ENCODE measurements at regions of chr1 and their contacts with region 1.

Region 1: DNA sequence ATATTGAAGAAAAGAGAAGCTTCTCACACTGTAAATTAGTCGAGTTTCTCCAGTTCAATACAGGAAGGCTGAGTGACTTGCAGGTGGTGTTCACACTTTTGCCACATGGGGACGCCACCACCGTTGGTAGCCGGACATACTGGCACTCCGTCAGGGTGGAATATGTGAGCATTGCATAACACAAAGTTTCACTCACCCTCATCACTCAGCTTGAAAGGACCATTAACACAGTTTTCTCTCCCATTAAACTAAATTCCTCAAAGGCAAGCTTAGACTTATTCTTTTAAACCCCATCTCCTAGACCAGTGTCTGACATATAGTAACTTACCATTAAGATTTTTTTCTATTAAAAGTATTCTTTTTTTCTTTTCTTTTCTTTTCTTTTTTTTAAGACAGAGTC is 105.3 kb upstream of the SERBP1 start:
- DNase-seq: peak; percentile 9
- ATAC-seq: peak; percentile 90
- H3K4me3 ChIP-seq: no peak overlapping the region
- H3K27ac ChIP-seq: no peak overlapping the region
- H3K4me1 ChIP-seq: no peaks in the 10 kb centered on the region
- H3K27me3 ChIP-seq: no peaks in the 10 kb centered on the region
- CTCF ChIP-seq: peak; percentile 66 to 77 (median 75)
- EP300 ChIP-seq: no peak
- POLR2A ChIP-seq: no peak
- RAD21 ChIP-seq: peak; percentile 65

Region 2: GRCh38 chr1:67552336-67552759 is 16.9 kb after region 1 on chr1:
- CTCF ChIA-PET with region 1: interaction called, 24 read pairs
- POLR2A ChIA-PET with region 1: interaction called, 3 read pairs
- RAD21 ChIA-PET with region 1: interaction called, 10 read pairs
- SMC1A ChIA-PET with region 1: interaction called, 14 read pairs
- in situ Hi-C with region 1: no loop called
- intact Hi-C with region 1: no loop called
- DNase-seq: no peak
- ATAC-seq: peak; percentile 71
- H3K4me3 ChIP-seq: no peak overlapping the region
- H3K27ac ChIP-seq: no peak overlapping the region
- H3K4me1 ChIP-seq: no peaks in the 10 kb centered on the region
- H3K27me3 ChIP-seq: no peaks in the 10 kb centered on the region; a peak in 1 of 4 replicates
- CTCF ChIP-seq: no peak
- EP300 ChIP-seq: no peak
- POLR2A ChIP-seq: no peak
- RAD21 ChIP-seq: no peak

Region 3: DNA sequence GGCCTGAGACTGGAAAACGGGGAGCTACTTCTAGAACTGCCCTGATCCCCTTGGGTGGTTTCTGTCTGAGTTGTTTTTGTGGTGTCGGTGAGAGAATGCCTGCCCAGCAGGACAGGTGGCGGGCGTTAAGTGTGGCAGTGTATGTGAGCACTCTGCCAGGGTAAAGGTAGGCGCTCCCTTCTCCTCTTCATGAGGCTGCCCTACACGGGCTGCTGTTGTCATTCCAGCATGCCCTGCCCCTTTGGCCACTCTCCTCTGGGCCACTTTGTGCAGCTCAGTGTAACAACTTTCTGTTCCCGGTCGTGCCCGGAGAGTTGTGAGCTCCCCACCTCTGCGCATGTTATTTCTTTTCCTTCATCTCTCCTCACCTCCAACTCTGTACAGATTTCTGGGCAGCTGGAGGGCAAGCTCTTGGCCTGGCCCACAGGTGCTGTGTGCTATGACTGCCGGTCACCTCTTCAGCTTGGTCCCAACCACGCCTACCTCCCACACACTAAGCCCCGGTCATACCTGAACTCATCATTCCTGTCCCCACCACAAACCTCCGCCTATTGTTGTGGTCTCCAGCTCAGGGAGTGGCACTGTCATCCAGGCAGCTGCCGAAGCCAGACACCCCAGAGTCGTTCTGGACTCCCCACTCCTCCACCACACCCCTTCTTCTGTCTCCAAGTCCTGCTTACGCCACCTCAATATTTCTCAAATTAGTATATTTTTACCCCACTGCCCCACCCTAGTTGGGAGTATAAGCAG is 218.5 kb after region 1 on chr1:
- CTCF ChIA-PET with region 1: interaction called, 213 read pairs
- POLR2A ChIA-PET with region 1: no interaction called
- RAD21 ChIA-PET with region 1: interaction called, 119 read pairs
- SMC1A ChIA-PET with region 1: interaction called, 138 read pairs
- in situ Hi-C with region 1: no loop called
- intact Hi-C with region 1: no loop called
- DNase-seq: no peak
- ATAC-seq: peak; percentile 72
- H3K4me3 ChIP-seq: no peak overlapping the region
- H3K27ac ChIP-seq: no peak overlapping the region
- H3K4me1 ChIP-seq: peaks cover 27% of the 10 kb centered on the region
- H3K27me3 ChIP-seq: no peaks in the 10 kb centered on the region
- CTCF ChIP-seq: no peak
- EP300 ChIP-seq: 0 out of 4 replicates have a peak, but pooled peaks of 1 of the 2 experiments have one; percentile 36
- POLR2A ChIP-seq: no peak
- RAD21 ChIP-seq: no peak

Region 4: GRCh38 chr1:68010090-68010489 is 474.6 kb after region 1 on chr1:
- CTCF ChIA-PET with region 1: interaction called, 13 read pairs
- POLR2A ChIA-PET with region 1: no interaction called
- RAD21 ChIA-PET with region 1: interaction called, 8 read pairs
- SMC1A ChIA-PET with region 1: interaction called, 6 read pairs
- in situ Hi-C with region 1: no loop called
- intact Hi-C with region 1: no loop called
- DNase-seq: no peak
- ATAC-seq: no peak
- H3K4me3 ChIP-seq: no peak overlapping the region
- H3K27ac ChIP-seq: no peak overlapping the region
- H3K4me1 ChIP-seq: no peaks in the 10 kb centered on the region
- H3K27me3 ChIP-seq: no peaks in the 10 kb centered on the region
- CTCF ChIP-seq: peak in 1 of 3 experiments; percentile 6; a peak in 1 of 6 replicates
- EP300 ChIP-seq: no peak
- POLR2A ChIP-seq: no peak
- RAD21 ChIP-seq: no peak

Measured in GM12878 (cell line).